Transverse colon (tissue), 4 donors: ENCODE measurements at regions of chr9 and their contacts with region 1.

Region 1: DNA sequence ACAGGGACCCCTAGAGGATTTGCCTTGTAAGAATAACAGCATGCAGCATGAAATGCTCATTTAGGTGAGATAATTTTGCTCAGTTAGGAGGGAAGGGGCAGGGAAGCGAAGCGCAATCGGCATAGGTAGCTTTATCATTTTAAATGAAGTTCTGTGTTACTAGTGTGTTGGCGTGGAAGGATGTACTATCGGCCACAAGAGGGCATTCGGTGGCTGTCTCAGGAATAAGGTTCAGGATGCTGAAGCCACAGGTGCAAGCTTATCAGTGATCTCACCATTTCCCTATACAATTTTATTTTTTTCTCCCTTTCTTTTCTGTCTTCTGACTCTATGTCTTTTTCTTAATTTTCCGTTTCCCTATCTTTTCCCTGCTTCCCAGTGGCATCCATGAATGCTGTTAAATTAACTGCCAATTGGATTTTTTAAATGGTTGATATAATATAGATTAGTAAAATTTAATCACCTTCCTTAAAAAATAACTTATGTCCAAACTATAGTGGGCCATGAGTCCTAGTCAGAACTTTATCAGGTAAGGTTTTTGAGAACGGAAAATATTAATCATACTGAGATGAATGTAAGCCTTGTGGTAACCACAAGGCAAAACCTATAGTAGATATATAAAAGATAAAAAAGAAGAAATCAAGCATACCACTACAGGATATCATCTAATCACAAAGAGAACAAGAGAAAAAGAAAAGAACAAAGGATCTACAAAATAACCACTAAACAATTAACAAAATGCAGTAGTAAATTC is 1.2 kb upstream of the INSL6 start:
- DNase-seq: peak; percentile 46
- H3K4me3 ChIP-seq: no peak overlapping the region
- H3K27ac ChIP-seq: no peak overlapping the region
- H3K4me1 ChIP-seq: no peaks in the 10 kb centered on the region
- H3K27me3 ChIP-seq: no peaks in the 10 kb centered on the region
- CTCF ChIP-seq: peak; percentile 53 to 78 (median 67)
- EP300 ChIP-seq: no peak
- POLR2A ChIP-seq: no peak

Region 2: DNA sequence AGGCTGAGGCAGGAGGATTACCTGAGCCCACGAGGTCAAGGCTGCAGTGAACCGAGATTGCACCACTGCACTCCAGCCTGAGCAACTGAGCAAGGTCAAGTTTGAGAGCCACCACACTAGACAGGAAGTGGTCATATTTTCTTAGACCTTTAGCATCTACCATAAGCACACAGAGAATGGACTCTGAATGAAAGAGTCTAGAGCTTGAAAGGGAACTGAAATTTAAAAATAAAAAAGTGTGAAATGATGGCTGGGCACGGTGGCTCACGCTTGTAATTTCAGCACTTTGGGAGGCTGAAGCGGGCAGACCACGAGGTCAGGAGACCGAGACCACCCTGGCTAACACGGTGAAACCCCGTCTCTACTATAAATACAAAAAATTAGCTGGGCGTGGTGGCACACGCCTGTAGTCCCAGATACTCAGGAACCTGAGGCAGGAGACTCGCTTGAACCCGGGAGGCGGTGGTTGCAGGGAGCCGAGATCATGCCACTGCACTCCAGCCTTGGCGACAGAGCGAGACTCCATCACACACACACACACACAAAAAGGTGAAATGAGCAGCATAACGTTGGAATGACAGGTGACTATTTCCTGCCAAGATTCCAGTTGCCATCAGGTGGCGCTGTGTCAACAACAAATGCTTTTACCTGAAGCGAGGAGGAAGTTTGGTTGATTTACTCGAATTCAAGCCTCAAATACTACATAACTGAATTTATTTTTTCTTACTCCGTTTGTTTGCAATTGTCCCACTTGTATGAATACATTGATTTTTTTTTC is 424.3 kb before region 1 on chr9:
- in situ Hi-C with region 1: loop called in 1 of 4 experiments (anchors 25 kb)
- intact Hi-C with region 1: no loop called
- DNase-seq: peak; percentile 89
- H3K4me3 ChIP-seq: peak overlapping the region in 3 of 4 donors; percentile 8 to 36 (median 19)
- H3K27ac ChIP-seq: peak overlapping the region; percentile 57 to 76 (median 66)
- H3K4me1 ChIP-seq: peaks cover 0 to 14% (median 4%) of the 10 kb centered on the region in 4 donors
- H3K27me3 ChIP-seq: no peaks in the 10 kb centered on the region
- CTCF ChIP-seq: peak; percentile 75 to 92 (median 86)
- EP300 ChIP-seq: no peak
- POLR2A ChIP-seq: no peak

Region 3: GRCh38 chr9:5402217-5402616 is 215.6 kb after region 1 on chr9:
- in situ Hi-C with region 1: loop called in 1 of 4 experiments (anchors 25 kb)
- intact Hi-C with region 1: no loop called
- DNase-seq: no peak
- H3K4me3 ChIP-seq: no peak overlapping the region
- H3K27ac ChIP-seq: no peak overlapping the region
- H3K4me1 ChIP-seq: no peaks in the 10 kb centered on the region
- H3K27me3 ChIP-seq: no peaks in the 10 kb centered on the region
- CTCF ChIP-seq: no peak
- EP300 ChIP-seq: no peak
- POLR2A ChIP-seq: no peak

Region 4: GRCh38 chr9:5437254-5438216 is 250.9 kb after region 1 on chr9 and contains the start of gene PLGRKT:
- in situ Hi-C with region 1: loop called in 1 of 4 experiments (anchors 25 kb)
- intact Hi-C with region 1: no loop called
- DNase-seq: peak; percentile 96
- H3K4me3 ChIP-seq: peak within 1 kb of the TSS; percentile 55 to 61 (median 57)
- H3K27ac ChIP-seq: peak within 1 kb of the TSS; percentile 91 to 97 (median 95)
- H3K4me1 ChIP-seq: peaks cover 6 to 21% (median 13%) of the 10 kb centered on the region in 4 donors
- H3K27me3 ChIP-seq: no peaks in the 10 kb centered on the region
- CTCF ChIP-seq: peak in 4 of 5 experiments; percentile 11 to 38 (median 17)
- EP300 ChIP-seq: no peak
- POLR2A ChIP-seq: peak; percentile 97
- total RNA-seq, gene PLGRKT: 1.6 to 58.3 (median 16.5) TPM

Region 5: DNA sequence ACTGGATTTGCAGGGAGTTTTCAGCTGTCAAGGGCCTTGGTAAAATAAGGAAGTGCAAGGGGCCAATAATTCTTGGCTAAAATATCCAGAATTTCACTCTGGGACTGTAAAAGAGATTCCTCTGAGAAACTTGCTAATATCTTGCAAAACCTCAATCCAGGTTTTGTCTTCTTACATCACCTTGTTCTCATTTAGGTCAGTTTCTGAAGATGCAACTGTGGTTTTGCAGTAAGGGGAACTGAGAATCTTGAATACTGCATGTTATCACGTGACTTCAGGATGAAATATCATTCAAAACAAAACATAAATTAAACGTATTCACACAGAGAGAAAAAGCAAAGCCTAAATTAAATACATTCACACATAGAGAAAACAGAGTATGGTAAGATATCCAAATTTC is 407.3 kb after region 1 on chr9:
- in situ Hi-C with region 1: loop called (anchors 10 to 25 kb)
- intact Hi-C with region 1: no loop called
- DNase-seq: no peak
- H3K4me3 ChIP-seq: no peak overlapping the region
- H3K27ac ChIP-seq: no peak overlapping the region
- H3K4me1 ChIP-seq: peaks cover 0 to 3% (median 0%) of the 10 kb centered on the region in 4 donors
- H3K27me3 ChIP-seq: no peaks in the 10 kb centered on the region
- CTCF ChIP-seq: no peak
- EP300 ChIP-seq: no peak
- POLR2A ChIP-seq: no peak